GM10248 (cell line): ENCODE measurements at regions of chr22 and their contacts with region 1.

Region 1: DNA sequence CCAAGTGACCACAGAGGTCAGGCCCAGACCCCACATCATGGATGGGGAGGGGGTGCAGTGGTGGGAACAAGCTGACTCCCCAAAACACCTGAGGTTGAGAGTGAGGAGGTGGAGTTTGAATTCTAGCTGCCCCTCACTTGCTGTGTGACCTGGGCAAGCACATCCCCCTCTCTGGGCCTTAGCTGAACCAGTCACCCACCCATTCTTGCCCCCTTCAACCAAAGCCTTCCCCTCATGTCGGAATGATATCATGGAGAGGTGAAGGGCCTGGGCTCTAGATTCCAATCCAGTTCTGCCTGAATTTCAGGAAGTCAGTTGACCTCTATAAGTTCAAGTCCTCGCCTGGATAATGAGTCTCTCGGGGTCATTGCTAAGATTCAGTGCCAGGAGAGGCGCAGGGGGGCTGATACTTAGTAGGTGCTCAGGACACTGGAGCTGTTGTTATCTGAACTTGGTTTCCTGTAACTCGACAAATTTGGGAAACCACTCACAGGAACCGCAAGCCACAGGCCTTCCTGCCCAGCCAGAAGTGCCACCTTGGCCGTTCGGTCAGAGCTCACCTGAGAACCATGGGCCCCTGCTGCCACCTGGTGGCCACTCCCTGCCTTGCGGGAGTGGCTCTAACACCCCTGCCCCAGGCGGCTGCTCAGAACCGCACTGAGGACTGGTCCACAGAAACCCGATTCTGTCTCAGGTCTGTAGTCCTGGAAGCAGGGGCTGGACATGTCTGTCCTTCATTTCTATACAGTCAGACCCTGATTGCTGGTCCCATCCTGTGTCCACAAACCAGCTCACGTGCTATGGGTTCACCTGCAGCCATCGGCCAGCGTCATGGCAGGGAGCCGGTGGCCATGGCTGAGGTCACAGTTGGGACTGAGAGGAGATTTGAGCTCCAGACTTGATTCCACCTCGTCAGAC is 6.9 kb downstream of the CDC42EP1 start:
- DNase-seq: peak; percentile 92
- CTCF ChIP-seq: peak; percentile 97

Region 2: DNA sequence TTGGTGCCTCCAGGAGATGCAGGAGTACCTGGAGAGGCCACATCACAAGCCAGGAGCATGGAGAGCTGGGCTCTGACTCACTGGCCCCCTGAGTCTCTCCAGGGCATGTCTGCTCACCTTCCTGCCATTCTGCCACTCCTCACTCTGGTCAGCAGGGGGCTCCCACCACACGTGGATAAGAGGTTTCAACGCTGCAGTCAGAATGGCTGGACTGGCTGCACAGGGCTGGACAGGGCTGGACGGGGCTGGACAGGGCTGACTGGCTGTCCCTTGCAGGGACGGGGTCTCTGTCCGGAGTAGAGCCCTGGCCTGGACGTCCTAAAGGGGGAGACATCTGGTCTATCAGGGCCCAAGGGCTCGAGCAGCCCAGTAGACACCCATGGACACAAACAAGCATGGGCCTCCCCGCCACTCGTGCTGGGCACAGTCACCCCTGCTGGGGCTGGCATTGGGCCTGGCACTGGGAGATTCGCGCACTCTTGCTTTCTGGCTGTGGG is 250.2 kb before region 1 on chr22:
- CTCF ChIA-PET with region 1: interaction called, 37 read pairs
- POLR2A ChIA-PET with region 1: no interaction called
- DNase-seq: peak; percentile 92
- CTCF ChIP-seq: peak; percentile 99

Region 3: GRCh38 chr22:37472418-37473006 is 94.7 kb before region 1 on chr22:
- CTCF ChIA-PET with region 1: interaction called, 22 read pairs
- POLR2A ChIA-PET with region 1: no interaction called
- DNase-seq: peak; percentile 55
- CTCF ChIP-seq: peak; percentile 38

Region 4: GRCh38 chr22:37486224-37486845 is 80.8 kb before region 1 on chr22 and contains the start of gene MFNG:
- CTCF ChIA-PET with region 1: interaction called, 16 read pairs
- POLR2A ChIA-PET with region 1: no interaction called
- DNase-seq: peak; percentile 94
- CTCF ChIP-seq: no peak

Region 5: DNA sequence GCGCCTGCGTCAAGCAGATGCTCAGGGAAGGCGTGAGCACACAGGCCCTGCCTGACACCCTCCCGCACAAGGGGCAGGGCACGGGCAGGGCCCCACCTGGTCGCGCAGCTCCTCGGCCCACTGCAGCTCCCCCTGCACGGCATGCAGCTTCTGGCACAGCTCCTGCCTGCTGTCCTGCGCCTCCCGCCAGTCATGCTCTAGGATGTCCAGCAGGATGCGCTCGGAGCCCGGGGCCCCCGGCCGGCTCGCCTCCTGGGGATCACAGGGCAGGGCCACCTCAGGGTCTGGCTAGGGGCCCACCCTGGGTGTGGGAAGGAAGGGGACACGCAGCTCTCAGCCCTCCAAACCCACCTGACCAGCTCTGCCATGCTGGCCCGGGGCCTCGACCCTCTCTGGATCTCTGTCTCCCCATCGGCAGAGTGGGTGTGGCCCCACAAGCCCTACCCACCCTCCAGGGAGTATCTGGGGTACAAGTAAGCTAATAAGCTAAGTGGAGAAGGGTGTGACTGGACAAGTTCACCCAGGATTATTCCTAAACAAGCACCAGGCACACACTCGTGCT is 58.6 kb before region 1 on chr22:
- CTCF ChIA-PET with region 1: interaction called, 15 read pairs
- POLR2A ChIA-PET with region 1: no interaction called
- DNase-seq: no peak
- CTCF ChIP-seq: no peak

Region 6: DNA sequence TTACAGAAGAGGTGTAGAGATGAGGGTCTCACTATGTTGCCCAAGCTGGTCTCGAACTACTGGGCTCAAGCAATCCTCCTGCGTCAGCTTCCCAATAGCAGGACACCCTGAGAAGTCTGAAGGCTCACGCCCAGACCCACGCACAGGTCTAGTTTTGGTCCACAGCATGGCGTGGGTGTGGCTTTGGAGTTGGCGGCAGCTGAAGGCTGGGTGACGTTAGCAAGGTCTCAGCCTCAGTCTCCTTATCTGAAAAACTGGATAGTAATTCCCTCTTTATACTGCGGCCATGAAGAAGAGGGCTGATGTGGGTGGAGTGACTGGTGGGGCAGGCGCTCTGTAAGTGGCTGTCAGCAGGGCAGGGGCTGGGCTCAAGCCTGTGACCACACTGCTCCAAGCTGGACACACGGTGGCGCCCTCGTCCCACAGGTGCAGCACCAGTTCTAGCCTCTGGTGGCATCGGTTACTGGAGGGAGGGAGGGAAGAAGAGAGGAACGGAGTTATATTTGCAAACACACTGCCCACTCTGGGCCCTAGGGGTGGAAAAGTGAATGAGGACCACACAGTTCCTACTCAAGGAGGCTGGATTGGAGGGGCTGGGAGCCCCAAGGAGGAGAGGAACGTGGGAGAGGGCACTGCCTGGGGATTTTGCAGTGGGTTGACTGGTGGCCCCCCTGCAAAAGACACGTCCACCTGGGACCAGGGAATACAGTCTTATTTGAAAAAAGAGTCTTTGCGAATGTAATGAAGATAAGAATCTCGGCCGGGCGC is 28.4 kb before region 1 on chr22:
- CTCF ChIA-PET with region 1: interaction called, 584 read pairs
- POLR2A ChIA-PET with region 1: no interaction called
- DNase-seq: peak; percentile 94
- CTCF ChIP-seq: peak; percentile 98

Region 7: GRCh38 chr22:37601540-37602442 is 34.6 kb after region 1 on chr22:
- CTCF ChIA-PET with region 1: interaction called, 365 read pairs
- POLR2A ChIA-PET with region 1: no interaction called
- DNase-seq: no peak
- CTCF ChIP-seq: no peak

Region 8: GRCh38 chr22:37625737-37626521 is 58.8 kb after region 1 on chr22:
- CTCF ChIA-PET with region 1: no interaction called
- POLR2A ChIA-PET with region 1: no interaction called
- DNase-seq: peak; percentile 43
- CTCF ChIP-seq: no peak

Region 9: DNA sequence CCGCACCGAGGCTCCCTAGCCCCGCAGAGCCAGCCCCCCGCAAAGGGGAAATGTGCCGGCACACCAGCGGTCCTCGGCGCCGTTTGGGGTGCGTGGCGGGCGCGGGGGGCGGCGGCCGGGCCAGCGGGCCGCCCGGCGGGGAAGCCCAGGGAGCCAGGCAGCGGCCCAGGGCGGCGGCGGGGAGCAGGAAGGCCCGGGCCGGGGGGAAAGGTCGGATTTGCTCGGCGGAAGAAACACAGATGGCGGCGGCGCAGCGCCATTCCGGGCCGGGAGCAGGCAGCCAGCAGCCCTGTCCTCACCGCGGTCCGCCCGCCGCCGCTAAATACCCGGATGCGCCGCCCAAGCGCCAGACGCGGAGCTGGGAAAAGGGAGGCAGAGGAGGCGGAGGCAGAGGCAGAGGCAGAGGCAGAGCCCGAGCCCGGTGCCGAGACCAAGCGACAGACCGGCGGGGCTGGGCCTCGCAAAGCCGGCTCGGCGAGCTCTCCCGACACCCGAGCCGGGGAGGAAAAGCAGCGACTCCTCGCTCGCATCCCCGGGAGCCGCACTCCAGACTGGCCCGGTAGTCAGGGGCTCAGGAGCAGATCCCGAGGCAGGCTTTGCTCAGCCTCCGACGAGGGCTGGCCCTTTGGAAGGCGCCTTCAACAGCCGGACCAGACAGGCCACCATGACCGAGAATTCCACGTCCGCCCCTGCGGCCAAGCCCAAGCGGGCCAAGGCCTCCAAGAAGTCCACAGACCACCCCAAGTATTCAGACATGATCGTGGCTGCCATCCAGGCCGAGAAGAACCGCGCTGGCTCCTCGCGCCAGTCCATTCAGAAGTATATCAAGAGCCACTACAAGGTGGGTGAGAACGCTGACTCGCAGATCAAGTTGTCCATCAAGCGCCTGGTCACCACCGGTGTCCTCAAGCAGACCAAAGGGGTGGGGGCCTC is 238.0 kb after region 1 on chr22:
- CTCF ChIA-PET with region 1: no interaction called
- POLR2A ChIA-PET with region 1: no interaction called
- DNase-seq: peak; percentile 57
- CTCF ChIP-seq: no peak